Calu3 (cell line): ENCODE measurements at regions of chr14 and their contacts with region 1.

Region 1: GRCh38 chr14:32083789-32084188 is 6.7 kb downstream of the ARHGAP5 start:
- DNase-seq: no peak
- H3K4me3 Mint-ChIP-seq: peak overlapping the region; percentile 58
- H3K27ac Mint-ChIP-seq: no peak overlapping the region
- H3K4me1 Mint-ChIP-seq: peaks cover 57% of the 10 kb centered on the region
- H3K27me3 Mint-ChIP-seq: no peaks in the 10 kb centered on the region
- CTCF ChIP-seq: no peak

Region 2: GRCh38 chr14:31414190-31414833 is 669.5 kb before region 1 on chr14:
- CTCF ChIA-PET with region 1: no interaction called
- intact Hi-C with region 1: no loop called
- DNase-seq: no peak
- H3K4me3 Mint-ChIP-seq: peak overlapping the region; percentile 8
- H3K27ac Mint-ChIP-seq: peak overlapping the region; percentile 43
- H3K4me1 Mint-ChIP-seq: peaks cover 20% of the 10 kb centered on the region
- H3K27me3 Mint-ChIP-seq: no peaks in the 10 kb centered on the region
- CTCF ChIP-seq: no peak

Region 3: GRCh38 chr14:32043624-32044023 is 40.2 kb before region 1 on chr14:
- CTCF ChIA-PET with region 1: no interaction called
- intact Hi-C with region 1: no loop called
- DNase-seq: no peak
- H3K4me3 Mint-ChIP-seq: no peak overlapping the region
- H3K27ac Mint-ChIP-seq: peak overlapping the region; percentile 81
- H3K4me1 Mint-ChIP-seq: peaks cover 10% of the 10 kb centered on the region
- H3K27me3 Mint-ChIP-seq: no peaks in the 10 kb centered on the region
- CTCF ChIP-seq: no peak

Region 4: DNA sequence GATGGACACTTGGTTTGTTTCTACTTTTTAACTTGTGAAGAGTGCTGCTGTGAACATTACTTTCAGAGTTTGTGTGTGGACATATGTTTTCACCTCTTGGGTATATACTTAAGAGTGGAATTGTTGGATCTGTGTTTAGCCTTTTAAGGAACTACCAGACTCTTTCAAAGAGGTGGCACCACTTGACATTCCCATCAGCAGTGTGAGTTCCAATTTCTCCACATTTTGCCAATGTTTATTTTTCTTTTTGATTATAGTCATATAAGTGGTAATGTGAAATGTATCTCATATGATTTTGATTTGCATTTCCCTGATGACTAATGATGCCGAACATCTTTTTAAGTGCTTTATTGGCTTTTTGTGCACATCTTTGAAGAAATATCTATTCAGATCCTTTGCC is 38.2 kb after region 1 on chr14:
- CTCF ChIA-PET with region 1: no interaction called
- intact Hi-C with region 1: loop called (anchors 5 kb)
- DNase-seq: no peak
- H3K4me3 Mint-ChIP-seq: no peak overlapping the region
- H3K27ac Mint-ChIP-seq: no peak overlapping the region
- H3K4me1 Mint-ChIP-seq: peaks cover 32% of the 10 kb centered on the region
- H3K27me3 Mint-ChIP-seq: no peaks in the 10 kb centered on the region
- CTCF ChIP-seq: no peak